A549 (cell line): ENCODE measurements at regions of chr17 and their contacts with region 1.

Region 1: GRCh38 chr17:57970706-57971105 is 15.5 kb upstream of the CUEDC1 start:
- DNase-seq: no peak
- ATAC-seq: peak in 1 of 2 experiments; percentile 9; a peak in 1 of 6 replicates
- H3K4me3 ChIP-seq: no peak overlapping the region
- H3K27ac ChIP-seq: peak overlapping the region in 1 of 2 experiments; percentile 50; a peak in 4 of 6 replicates
- H3K4me1 ChIP-seq: peaks cover 36% of the 10 kb centered on the region
- CTCF ChIP-seq: no peak
- EP300 ChIP-seq: no peak
- POLR2A ChIP-seq: no peak
- RAD21 ChIP-seq: no peak

Region 2: GRCh38 chr17:57842280-57842679 is 128.4 kb before region 1 on chr17:
- CTCF ChIA-PET with region 1: no interaction called
- POLR2A ChIA-PET with region 1: no interaction called
- DNase-seq: no peak
- ATAC-seq: no peak
- H3K4me3 ChIP-seq: no peak overlapping the region
- H3K27ac ChIP-seq: no peak overlapping the region
- H3K4me1 ChIP-seq: peaks cover 28% of the 10 kb centered on the region
- CTCF ChIP-seq: no peak
- EP300 ChIP-seq: no peak
- POLR2A ChIP-seq: no peak
- RAD21 ChIP-seq: no peak

Region 3: GRCh38 chr17:57982452-57983170 is 11.9 kb after region 1 on chr17:
- CTCF ChIA-PET with region 1: interaction called, 386 read pairs
- POLR2A ChIA-PET with region 1: interaction called, 3 read pairs
- DNase-seq: no peak
- ATAC-seq: no peak
- H3K4me3 ChIP-seq: no peak overlapping the region
- H3K27ac ChIP-seq: 0 out of 6 replicates have a peak overlapping the region, but pooled peaks of 1 of the 2 experiments have one; percentile 13
- H3K4me1 ChIP-seq: peaks cover 62% of the 10 kb centered on the region
- CTCF ChIP-seq: no peak
- EP300 ChIP-seq: no peak
- POLR2A ChIP-seq: no peak
- RAD21 ChIP-seq: no peak